ENCODE measurements at regions of chr1 and their contacts with region 1.

Region 1: DNA sequence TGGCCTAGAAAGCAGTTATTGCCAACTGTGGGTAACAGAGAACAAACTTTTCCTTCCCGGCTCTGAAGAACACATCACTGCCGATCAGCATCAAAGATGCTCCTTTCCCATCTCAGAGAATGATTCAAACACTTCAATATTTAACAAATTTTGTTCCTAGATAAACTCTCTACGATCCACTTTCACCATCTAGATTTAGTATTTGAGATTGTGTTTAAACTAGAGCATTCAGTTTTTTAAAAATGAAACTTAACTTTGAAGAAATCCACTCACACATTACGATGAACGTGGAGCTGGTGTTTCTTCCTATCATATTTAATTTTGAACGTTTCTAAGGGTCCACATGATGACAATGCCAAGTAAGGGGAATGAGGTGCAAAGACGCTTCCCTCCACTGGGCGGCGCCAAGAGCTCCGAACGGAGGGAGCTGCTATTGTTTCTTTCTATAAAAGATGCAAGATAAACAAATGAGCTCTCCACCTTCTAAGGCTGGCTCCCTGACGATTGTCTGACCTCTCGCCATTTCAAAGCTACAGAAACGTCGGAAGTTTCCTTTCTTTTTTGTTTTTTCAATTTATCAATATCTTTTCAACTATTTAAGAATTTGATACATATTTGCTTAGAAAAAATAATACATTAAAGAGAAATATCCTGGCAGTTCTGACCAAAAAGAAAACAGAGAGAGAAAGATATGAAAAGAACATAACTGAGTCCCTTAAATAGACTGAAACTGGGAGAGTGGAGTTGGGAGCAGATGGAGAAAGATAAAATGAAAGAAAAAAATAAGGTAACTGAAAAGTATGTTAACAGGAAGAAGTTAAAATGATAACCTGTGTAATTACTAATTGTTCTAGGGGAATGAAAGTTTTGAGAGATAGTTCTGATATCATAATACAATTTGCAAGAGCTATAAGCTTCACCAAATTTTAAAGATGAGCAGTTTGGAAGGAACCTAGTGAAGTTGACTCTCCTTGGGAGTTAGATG is 4.4 kb upstream of the BARHL2 start:
- DNase-seq: peak; percentile 58
- H3K4me3 ChIP-seq: no peak overlapping the region
- H3K27ac ChIP-seq: no peak overlapping the region
- H3K4me1 ChIP-seq: peaks cover 13 to 53% (median 45%) of the 10 kb centered on the region in 4 donors
- H3K27me3 ChIP-seq: peaks cover 100% of the 10 kb centered on the region
- CTCF ChIP-seq: peak; percentile 56 to 76 (median 71)
- EP300 ChIP-seq: no peak
- POLR2A ChIP-seq: no peak

Region 2: GRCh38 chr1:90434460-90434859 is 287.0 kb before region 1 on chr1:
- in situ Hi-C with region 1: no loop called
- intact Hi-C with region 1: no loop called
- DNase-seq: no peak
- H3K4me3 ChIP-seq: no peak overlapping the region
- H3K27ac ChIP-seq: no peak overlapping the region
- H3K4me1 ChIP-seq: no peaks in the 10 kb centered on the region
- H3K27me3 ChIP-seq: no peaks in the 10 kb centered on the region
- CTCF ChIP-seq: no peak
- EP300 ChIP-seq: no peak
- POLR2A ChIP-seq: no peak

Region 3: DNA sequence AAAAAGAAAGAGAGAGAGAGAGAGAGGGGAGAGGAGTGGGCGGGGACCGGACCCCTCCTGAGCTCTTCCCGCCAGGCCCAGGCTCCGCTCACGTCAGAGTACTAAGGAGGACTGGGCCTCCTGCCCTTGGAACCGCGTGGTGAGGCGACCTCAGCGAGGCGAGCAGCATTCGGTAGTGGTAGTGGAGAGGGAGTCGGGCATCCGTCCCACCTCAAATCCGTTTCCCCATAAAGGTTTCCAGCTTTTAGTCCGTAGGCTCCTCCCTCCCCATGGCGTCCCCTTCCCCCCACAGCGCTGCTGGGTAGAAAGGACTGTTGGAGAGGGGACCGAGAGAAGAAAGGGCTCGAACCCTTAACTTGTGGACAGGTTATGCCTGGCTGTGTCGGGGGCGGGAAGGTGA is 120.0 kb after region 1 on chr1:
- in situ Hi-C with region 1: no loop called
- intact Hi-C with region 1: loop called (anchors 10 kb)
- DNase-seq: no peak
- H3K4me3 ChIP-seq: no peak overlapping the region
- H3K27ac ChIP-seq: no peak overlapping the region
- H3K4me1 ChIP-seq: peaks cover 0 to 3% (median 0%) of the 10 kb centered on the region in 4 donors
- H3K27me3 ChIP-seq: peaks cover 61% of the 10 kb centered on the region
- CTCF ChIP-seq: no peak
- EP300 ChIP-seq: no peak
- POLR2A ChIP-seq: no peak

Measured in transverse colon (tissue), 4 donors.